Naive thymus-derived CD4-positive, alpha-beta T cell (primary cell): ENCODE measurements at regions of chr4 and their contacts with region 1.

Region 1: DNA sequence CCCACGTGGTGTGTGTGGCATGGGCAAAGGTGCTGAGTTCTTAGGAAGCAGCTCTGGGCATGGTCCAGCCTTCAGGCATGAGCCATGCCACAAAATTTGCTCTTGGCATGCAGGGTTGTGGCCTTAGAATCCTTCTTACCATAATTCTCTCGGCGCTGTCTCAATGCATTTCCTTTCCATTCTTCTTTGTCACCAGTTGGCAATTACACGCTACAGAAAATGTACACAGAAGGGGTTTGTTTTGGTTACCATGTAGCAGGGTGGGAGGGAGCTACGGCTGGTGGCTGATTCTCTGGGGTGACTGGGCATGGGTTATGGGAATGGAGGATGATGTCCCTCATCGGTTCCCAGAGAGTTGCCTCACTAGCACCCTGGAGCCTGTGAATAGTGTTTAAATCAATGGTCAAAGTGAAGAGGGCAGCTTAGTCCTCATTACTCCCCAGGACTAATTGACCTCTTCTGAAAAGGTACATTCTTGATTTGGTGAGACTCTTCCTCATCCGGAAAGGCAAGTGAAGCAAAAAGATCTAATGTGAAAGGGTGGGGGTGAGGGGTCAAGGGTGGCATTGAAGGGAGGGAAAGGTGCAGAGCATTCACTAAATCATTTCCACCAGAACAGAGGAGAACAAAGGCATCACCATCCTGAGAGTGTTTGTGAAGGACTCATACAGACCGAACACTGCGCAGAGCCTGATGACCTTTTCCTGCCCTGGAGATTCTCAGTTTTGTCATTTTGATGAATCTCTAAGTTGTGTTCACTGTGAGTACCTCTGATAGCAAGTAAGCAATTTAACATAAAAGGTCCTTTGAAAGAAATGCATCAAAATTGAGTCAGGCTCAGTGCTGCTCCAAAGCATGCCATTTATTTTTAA is 199.8 kb upstream of the SFRP2 start:
- DNase-seq: no peak
- ATAC-seq: no peak
- H3K4me3 ChIP-seq: no peak overlapping the region
- H3K4me3 Mint-ChIP-seq: no peak overlapping the region
- H3K27ac ChIP-seq: no peak overlapping the region
- H3K27ac Mint-ChIP-seq: no peak overlapping the region
- H3K4me1 ChIP-seq: no peaks in the 10 kb centered on the region
- H3K4me1 Mint-ChIP-seq: no peaks in the 10 kb centered on the region
- H3K27me3 ChIP-seq: no peaks in the 10 kb centered on the region
- H3K27me3 Mint-ChIP-seq: peaks cover 0 to 27% (median 5%) of the 10 kb centered on the region in 5 donors

Region 2: GRCh38 chr4:153962311-153963039 is 26.3 kb before region 1 on chr4:
- CTCF ChIA-PET with region 1: no interaction called
- POLR2A ChIA-PET with region 1: no interaction called
- intact Hi-C with region 1: loop called in 1 of 2 experiments (anchors 1 kb)
- DNase-seq: no peak
- ATAC-seq: no peak
- H3K4me3 ChIP-seq: no peak overlapping the region
- H3K4me3 Mint-ChIP-seq: peak overlapping the region in 2 of 10 donors; percentile 33 to 68
- H3K27ac ChIP-seq: no peak overlapping the region
- H3K27ac Mint-ChIP-seq: peak overlapping the region in 1 of 9 donors; percentile 56
- H3K4me1 ChIP-seq: no peaks in the 10 kb centered on the region
- H3K4me1 Mint-ChIP-seq: peaks cover 0 to 10% (median 0%) of the 10 kb centered on the region in 7 donors
- H3K27me3 ChIP-seq: no peaks in the 10 kb centered on the region
- H3K27me3 Mint-ChIP-seq: peaks cover 0 to 3% (median 0%) of the 10 kb centered on the region in 5 donors

Region 3: GRCh38 chr4:153974452-153974851 is 14.3 kb before region 1 on chr4:
- CTCF ChIA-PET with region 1: no interaction called
- POLR2A ChIA-PET with region 1: no interaction called
- intact Hi-C with region 1: no loop called
- DNase-seq: no peak
- ATAC-seq: no peak
- H3K4me3 ChIP-seq: no peak overlapping the region
- H3K4me3 Mint-ChIP-seq: no peak overlapping the region
- H3K27ac ChIP-seq: no peak overlapping the region
- H3K27ac Mint-ChIP-seq: no peak overlapping the region
- H3K4me1 ChIP-seq: no peaks in the 10 kb centered on the region
- H3K4me1 Mint-ChIP-seq: no peaks in the 10 kb centered on the region
- H3K27me3 ChIP-seq: no peaks in the 10 kb centered on the region
- H3K27me3 Mint-ChIP-seq: no peaks in the 10 kb centered on the region